ENCODE measurements at regions of chr6 and their contacts with region 1.

Region 1: GRCh38 chr6:41072676-41073623 is at the start of gene NFYA:
- DNase-seq: peak; percentile 99
- H3K4me3 ChIP-seq: peak within 1 kb of the TSS; percentile 98
- H3K4me3 Mint-ChIP-seq: peak within 1 kb of the TSS; percentile 92
- H3K27ac Mint-ChIP-seq: peak within 1 kb of the TSS; percentile 95
- H3K4me1 ChIP-seq: peaks cover 16% of the 10 kb centered on the region; the same call in 1 of the 2 replicates
- H3K4me1 Mint-ChIP-seq: peaks cover 29% of the 10 kb centered on the region
- H3K27me3 ChIP-seq: no peaks in the 10 kb centered on the region
- H3K27me3 Mint-ChIP-seq: no peaks in the 10 kb centered on the region
- CTCF ChIP-seq: peak; percentile 16 to 43
- total RNA-seq, gene NFYA: 25.7 and 27.7 TPM in 2 replicates

Region 2: GRCh38 chr6:40587240-40588069 is 485.5 kb before region 1 on chr6 and contains the start of gene LRFN2:
- CTCF ChIA-PET with region 1: no interaction called
- POLR2A ChIA-PET with region 1: no interaction called
- intact Hi-C with region 1: loop called (anchors 5 kb)
- DNase-seq: peak; percentile 57 to 85
- H3K4me3 ChIP-seq: peak within 1 kb of the TSS; percentile 39
- H3K4me3 Mint-ChIP-seq: peak within 1 kb of the TSS; percentile 82
- H3K27ac Mint-ChIP-seq: no peak within 1 kb of the TSS
- H3K4me1 ChIP-seq: no peaks in the 10 kb centered on the region; the same call in 1 of the 2 replicates
- H3K4me1 Mint-ChIP-seq: peaks cover 12% of the 10 kb centered on the region
- H3K27me3 ChIP-seq: peaks cover 3% of the 10 kb centered on the region; the same call in 1 of the 2 replicates
- H3K27me3 Mint-ChIP-seq: peaks cover 27% of the 10 kb centered on the region
- CTCF ChIP-seq: peak; percentile 72
- total RNA-seq, gene LRFN2: not detected in 2 replicates

Region 3: DNA sequence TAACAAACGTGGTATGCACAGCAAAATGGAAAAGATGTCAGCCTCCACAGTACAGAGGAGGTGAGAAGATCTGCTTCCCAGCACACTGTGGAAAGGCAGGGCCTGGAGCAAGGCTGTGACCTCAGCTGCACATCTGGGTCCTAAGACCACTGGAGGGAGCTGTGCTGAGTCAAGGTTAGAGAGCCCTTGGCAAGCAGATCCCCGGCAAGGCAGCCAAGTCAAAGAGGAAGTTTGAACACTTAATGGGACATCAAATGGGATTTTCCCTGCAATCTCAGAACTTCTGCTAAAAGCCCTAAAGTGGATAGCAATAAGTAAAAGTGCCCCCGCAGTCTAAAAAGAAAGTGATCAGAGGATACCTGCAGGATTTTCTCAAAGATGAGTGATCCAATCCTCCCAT is 73.4 kb before region 1 on chr6:
- CTCF ChIA-PET with region 1: interaction called, 9 read pairs
- POLR2A ChIA-PET with region 1: interaction called, 14 read pairs
- intact Hi-C with region 1: no loop called
- DNase-seq: peak; percentile 61 to 73
- H3K4me3 ChIP-seq: no peak overlapping the region
- H3K4me3 Mint-ChIP-seq: no peak overlapping the region
- H3K27ac Mint-ChIP-seq: peak overlapping the region; percentile 99
- H3K4me1 ChIP-seq: peaks cover 44% of the 10 kb centered on the region
- H3K4me1 Mint-ChIP-seq: peaks cover 53% of the 10 kb centered on the region
- H3K27me3 ChIP-seq: no peaks in the 10 kb centered on the region
- H3K27me3 Mint-ChIP-seq: no peaks in the 10 kb centered on the region
- CTCF ChIP-seq: peak in 1 of 2 experiments; percentile 44

Region 4: DNA sequence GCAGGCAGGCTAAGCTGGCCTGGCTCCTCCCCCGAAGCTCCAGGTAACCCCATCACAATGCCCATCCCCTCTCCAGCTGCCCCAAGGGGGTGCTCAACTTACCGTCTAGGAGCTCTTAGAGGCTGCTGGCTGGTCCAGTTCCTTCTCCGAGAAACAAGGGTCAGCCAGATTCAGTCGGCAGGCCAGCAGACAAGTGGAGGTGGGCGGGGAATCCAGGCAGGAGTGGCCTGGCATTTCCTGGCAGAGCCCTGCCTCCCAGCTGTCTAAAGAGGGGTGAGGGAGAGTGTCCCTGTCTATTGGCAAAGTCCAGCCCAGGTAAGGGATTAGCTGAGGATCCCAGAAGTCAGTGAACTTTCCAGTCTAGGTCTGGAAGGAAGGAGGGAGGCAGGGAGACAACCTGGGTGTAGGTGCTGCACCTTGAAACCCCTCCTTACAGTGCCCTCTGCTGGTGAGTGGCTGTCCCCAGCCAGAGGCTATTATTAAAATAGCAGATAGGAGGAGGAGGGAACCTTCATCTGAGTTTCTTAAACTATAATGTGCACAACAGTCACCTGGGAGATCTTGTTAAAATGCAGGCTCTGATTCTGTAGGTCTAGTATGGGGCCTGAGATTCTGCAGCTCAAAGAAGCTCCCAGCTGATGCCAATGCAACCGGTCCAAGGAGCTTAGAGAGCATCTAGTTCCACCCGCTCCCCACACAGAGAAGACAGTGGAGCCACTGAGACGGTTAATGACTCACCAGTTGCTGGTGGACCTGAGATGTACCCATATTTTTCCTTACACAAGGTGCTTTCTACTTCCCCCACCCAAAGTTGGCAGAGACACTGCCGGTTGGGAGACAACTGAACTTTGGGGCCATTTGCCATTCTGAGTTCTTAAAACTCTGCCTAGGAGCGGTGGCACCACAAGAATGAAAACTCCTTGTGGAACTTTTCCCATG is 33.6 kb before region 1 on chr6 and contains the start of gene UNC5CL:
- CTCF ChIA-PET with region 1: interaction called, 7 read pairs
- POLR2A ChIA-PET with region 1: interaction called, 16 read pairs
- intact Hi-C with region 1: loop called (anchors 2 kb)
- DNase-seq: peak; percentile 83 to 84
- H3K4me3 ChIP-seq: no peak within 1 kb of the TSS
- H3K4me3 Mint-ChIP-seq: peak within 1 kb of the TSS; percentile 63
- H3K27ac Mint-ChIP-seq: peak within 1 kb of the TSS; percentile 96
- H3K4me1 ChIP-seq: peaks cover 59% of the 10 kb centered on the region
- H3K4me1 Mint-ChIP-seq: peaks cover 41% of the 10 kb centered on the region
- H3K27me3 ChIP-seq: no peaks in the 10 kb centered on the region
- H3K27me3 Mint-ChIP-seq: no peaks in the 10 kb centered on the region
- CTCF ChIP-seq: peak; percentile 57 to 65
- total RNA-seq, gene UNC5CL: 4.5 and 5.5 TPM in 2 replicates

Region 5: GRCh38 chr6:41157323-41157722 is 84.4 kb after region 1 on chr6:
- CTCF ChIA-PET with region 1: no interaction called
- POLR2A ChIA-PET with region 1: no interaction called
- intact Hi-C with region 1: no loop called
- DNase-seq: no peak
- H3K4me3 ChIP-seq: no peak overlapping the region
- H3K4me3 Mint-ChIP-seq: no peak overlapping the region
- H3K27ac Mint-ChIP-seq: no peak overlapping the region
- H3K4me1 ChIP-seq: peaks cover 18% of the 10 kb centered on the region
- H3K4me1 Mint-ChIP-seq: peaks cover 20% of the 10 kb centered on the region
- H3K27me3 ChIP-seq: no peaks in the 10 kb centered on the region
- H3K27me3 Mint-ChIP-seq: no peaks in the 10 kb centered on the region
- CTCF ChIP-seq: no peak

Region 6: GRCh38 chr6:41182069-41183034 is 109.4 kb after region 1 on chr6:
- CTCF ChIA-PET with region 1: interaction called, 6 read pairs
- POLR2A ChIA-PET with region 1: no interaction called
- intact Hi-C with region 1: loop called (anchors 5 kb)
- DNase-seq: peak; percentile 65 to 70
- H3K4me3 ChIP-seq: no peak overlapping the region
- H3K4me3 Mint-ChIP-seq: no peak overlapping the region
- H3K27ac Mint-ChIP-seq: no peak overlapping the region
- H3K4me1 ChIP-seq: no peaks in the 10 kb centered on the region
- H3K4me1 Mint-ChIP-seq: no peaks in the 10 kb centered on the region
- H3K27me3 ChIP-seq: no peaks in the 10 kb centered on the region
- H3K27me3 Mint-ChIP-seq: peaks cover 8% of the 10 kb centered on the region
- CTCF ChIP-seq: peak; percentile 57 to 83

Measured in Caco-2 (cell line).